ENCODE measurements at regions of chr2 and their contacts with region 1.

Region 1: GRCh38 chr2:6653281-6653750 is 212.4 kb downstream of the CMPK2 start:
- DNase-seq: no peak
- ATAC-seq: peak in 3 of 4 donors; percentile 54 to 68 (median 67)
- H3K4me3 ChIP-seq: no peak overlapping the region
- H3K27ac ChIP-seq: no peak overlapping the region
- H3K4me1 ChIP-seq: peaks cover 12% of the 10 kb centered on the region
- H3K27me3 ChIP-seq: no peaks in the 10 kb centered on the region
- CTCF ChIP-seq: no peak

Region 2: DNA sequence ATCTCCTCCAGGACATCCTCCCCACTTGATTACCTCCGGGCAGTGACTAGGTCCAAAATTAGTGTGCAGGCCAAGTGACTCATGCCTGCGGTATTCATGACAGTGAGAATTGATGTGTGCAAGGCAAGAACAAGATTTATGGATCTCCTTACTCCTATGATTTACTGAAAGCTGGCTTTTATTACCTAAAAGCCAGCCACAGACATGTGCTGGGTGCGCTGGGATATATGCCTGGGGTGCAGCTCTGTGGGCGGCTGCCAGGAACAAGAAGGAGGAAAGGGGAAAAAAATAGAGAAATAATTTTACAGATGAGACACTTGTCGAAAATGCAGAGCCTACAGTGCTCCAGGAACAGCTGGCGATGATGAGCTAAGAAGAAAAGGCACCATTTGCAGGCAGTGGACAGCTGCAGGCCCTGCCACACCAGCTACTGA is 146.9 kb before region 1 on chr2:
- intact Hi-C with region 1: loop called in 1 of 2 experiments (anchors 5 kb)
- DNase-seq: no peak
- ATAC-seq: peak in 3 of 4 donors; percentile 65 to 87 (median 78)
- H3K4me3 ChIP-seq: no peak overlapping the region
- H3K27ac ChIP-seq: no peak overlapping the region
- H3K4me1 ChIP-seq: peaks cover 6% of the 10 kb centered on the region
- H3K27me3 ChIP-seq: no peaks in the 10 kb centered on the region
- CTCF ChIP-seq: no peak